Right lobe of liver (tissue), 6 donors: ENCODE measurements at regions of chr20 and their contacts with region 1.

Region 1: DNA sequence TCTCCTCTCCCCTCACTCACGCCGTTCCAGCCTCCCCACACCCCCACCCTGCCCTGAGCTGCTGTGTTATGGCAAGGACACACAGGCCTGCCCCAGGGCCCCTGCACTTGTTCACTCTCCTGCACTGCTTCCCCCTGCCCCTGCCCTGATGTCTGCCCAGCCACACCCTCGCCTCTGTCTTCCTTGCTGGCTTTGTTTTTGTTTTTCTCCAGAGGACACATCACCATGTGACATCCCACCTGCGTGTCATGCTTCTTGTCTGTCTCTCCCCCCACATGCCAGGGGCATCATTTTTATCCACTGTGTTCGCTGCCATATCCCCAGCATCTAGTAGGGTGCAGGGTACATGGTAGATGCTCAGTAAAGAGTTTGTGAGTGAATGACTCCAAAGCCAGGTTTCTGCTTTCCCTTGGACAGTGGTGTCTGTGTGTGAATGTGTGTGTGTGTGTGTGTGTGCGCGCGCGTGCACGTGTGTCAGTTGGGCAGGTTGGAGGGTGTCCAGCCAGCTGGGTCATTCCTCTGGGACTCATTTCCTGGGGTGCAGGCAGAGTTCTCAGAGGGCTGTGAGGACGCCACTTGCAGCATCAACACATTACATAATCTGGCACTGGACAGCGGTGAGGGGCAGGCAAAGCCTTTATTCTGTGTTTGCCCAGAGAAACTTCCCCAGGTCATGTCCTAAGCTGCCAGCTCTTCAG is 60.6 kb downstream of the STK35 start:
- DNase-seq: no peak
- ATAC-seq: peak in 2 of 4 donors; percentile 28 to 30
- H3K4me3 ChIP-seq: no peak overlapping the region
- H3K27ac ChIP-seq: no peak overlapping the region
- H3K4me1 ChIP-seq: no peaks in the 10 kb centered on the region
- H3K27me3 ChIP-seq: no peaks in the 10 kb centered on the region
- CTCF ChIP-seq: no peak
- POLR2A ChIP-seq: no peak

Region 2: DNA sequence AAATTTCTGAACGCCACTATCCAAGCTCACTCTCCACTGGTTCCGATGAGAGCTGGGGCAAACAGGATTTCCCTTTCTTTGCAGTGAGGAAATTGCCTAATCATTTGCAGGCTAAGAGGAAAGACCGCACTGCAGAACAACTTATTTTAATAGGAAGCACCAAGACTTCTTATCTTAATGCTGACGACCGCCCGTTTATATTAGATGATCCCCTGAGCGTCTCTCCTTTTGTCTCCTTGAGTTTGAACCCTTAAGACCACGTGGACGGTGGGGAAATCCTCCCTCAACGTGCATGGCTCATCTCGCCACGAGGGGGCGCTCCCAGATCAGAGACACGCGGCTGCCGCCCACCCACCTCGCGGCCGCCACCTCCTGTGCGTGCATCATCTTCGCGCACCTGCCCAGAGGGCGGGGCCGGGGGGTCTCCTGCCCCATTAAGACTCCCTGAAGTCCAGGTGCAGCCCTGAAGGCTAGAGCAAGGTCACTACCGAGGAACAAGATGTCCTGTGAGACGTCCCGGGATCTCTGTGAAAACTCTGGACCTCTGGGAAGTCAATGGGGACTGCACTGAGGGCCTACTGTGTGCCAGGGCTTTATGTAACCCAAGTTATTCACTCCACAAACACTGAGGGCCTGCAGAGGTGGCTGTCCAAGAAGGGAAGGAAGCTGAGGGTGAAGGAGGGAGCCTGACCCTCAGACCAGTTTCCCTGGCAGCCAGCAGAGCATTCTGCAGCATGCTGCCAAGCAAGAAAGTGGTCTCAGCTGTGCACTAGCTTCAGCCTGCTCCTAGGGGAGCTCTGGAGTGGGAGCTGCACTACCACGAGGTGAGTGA is 196.5 kb before region 1 on chr20:
- intact Hi-C with region 1: loop called in 1 of 2 experiments (anchors 10 kb)
- DNase-seq: peak; percentile 75 to 77 (median 77)
- ATAC-seq: peak; percentile 80 to 93 (median 90)
- H3K4me3 ChIP-seq: peak overlapping the region in 1 of 3 donors; percentile 0
- H3K27ac ChIP-seq: no peak overlapping the region
- H3K4me1 ChIP-seq: peaks cover 0 to 8% (median 0%) of the 10 kb centered on the region in 4 donors
- H3K27me3 ChIP-seq: no peaks in the 10 kb centered on the region
- CTCF ChIP-seq: peak; percentile 91 to 97 (median 94)
- POLR2A ChIP-seq: no peak

Region 3: DNA sequence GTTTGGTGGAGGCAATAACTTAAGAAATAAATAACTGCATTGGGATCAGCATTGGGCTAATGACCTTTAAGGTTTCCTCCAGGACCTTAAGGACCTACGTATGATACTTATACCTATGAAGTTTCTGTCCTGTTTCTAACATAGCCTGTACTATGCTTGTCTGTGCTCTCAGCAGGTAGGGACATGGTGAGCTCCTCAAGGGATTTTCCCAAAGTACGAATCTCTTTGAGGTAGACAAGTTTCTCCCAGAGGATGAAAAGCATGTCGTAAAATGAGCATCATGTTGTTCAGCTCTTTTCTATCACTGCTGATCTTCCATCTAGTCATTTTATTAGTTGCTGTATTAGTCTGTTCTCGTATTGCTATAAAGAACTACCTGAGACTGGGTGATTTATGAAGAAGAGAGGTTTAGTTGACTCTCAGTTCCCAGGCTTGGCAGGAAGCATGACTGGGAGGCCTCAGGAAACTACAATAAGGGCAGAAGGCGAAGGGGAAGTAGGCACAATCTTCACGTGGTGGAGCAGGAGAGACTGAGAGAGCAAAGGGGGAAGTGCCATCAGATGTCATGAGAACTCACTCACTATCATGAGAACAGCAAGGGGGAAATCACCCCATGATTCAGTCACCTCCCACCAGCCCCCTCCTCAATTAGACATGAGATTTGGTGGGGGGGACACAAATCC is 55.7 kb after region 1 on chr20:
- intact Hi-C with region 1: no loop called
- DNase-seq: no peak
- ATAC-seq: peak; percentile 50 to 79 (median 78)
- H3K4me3 ChIP-seq: no peak overlapping the region
- H3K27ac ChIP-seq: peak overlapping the region in 2 of 3 donors; percentile 29 to 51
- H3K4me1 ChIP-seq: no peaks in the 10 kb centered on the region
- H3K27me3 ChIP-seq: no peaks in the 10 kb centered on the region
- CTCF ChIP-seq: no peak
- POLR2A ChIP-seq: no peak